Right lobe of liver (tissue), 6 donors: ENCODE measurements at regions of chr1 and their contacts with region 1.

Region 1: DNA sequence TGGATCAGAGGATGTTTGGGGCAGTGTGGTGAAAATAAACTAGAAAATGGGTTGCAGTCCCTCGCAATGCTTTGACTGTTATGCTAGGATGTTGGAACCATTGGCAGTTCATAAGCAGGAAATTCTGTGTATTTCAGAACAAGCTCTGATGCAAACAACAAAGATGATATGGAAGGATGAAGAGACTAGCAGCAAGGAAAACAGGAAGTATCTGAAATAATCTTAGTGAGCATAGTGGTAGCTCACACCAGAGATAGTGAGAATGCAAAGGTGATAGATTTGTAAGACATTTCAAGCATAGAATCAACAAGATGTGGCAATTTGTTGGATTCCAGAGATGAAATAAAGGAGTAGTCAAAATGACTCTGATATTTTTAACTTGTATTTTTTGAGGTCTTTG is 11.1 kb upstream of the RCC1 start:
- DNase-seq: no peak
- ATAC-seq: no peak
- H3K4me3 ChIP-seq: no peak overlapping the region
- H3K27ac ChIP-seq: no peak overlapping the region
- H3K4me1 ChIP-seq: no peaks in the 10 kb centered on the region
- H3K27me3 ChIP-seq: no peaks in the 10 kb centered on the region
- CTCF ChIP-seq: no peak
- POLR2A ChIP-seq: no peak

Region 2: GRCh38 chr1:28409090-28409489 is 85.6 kb before region 1 on chr1:
- intact Hi-C with region 1: loop called in 1 of 2 experiments (anchors 10 kb)
- DNase-seq: no peak
- ATAC-seq: no peak
- H3K4me3 ChIP-seq: no peak overlapping the region
- H3K27ac ChIP-seq: no peak overlapping the region
- H3K4me1 ChIP-seq: peaks cover 0 to 11% (median 5%) of the 10 kb centered on the region in 4 donors
- H3K27me3 ChIP-seq: no peaks in the 10 kb centered on the region
- CTCF ChIP-seq: no peak
- POLR2A ChIP-seq: no peak